ENCODE measurements at regions of chr16 and their contacts with region 1.

Region 1: DNA sequence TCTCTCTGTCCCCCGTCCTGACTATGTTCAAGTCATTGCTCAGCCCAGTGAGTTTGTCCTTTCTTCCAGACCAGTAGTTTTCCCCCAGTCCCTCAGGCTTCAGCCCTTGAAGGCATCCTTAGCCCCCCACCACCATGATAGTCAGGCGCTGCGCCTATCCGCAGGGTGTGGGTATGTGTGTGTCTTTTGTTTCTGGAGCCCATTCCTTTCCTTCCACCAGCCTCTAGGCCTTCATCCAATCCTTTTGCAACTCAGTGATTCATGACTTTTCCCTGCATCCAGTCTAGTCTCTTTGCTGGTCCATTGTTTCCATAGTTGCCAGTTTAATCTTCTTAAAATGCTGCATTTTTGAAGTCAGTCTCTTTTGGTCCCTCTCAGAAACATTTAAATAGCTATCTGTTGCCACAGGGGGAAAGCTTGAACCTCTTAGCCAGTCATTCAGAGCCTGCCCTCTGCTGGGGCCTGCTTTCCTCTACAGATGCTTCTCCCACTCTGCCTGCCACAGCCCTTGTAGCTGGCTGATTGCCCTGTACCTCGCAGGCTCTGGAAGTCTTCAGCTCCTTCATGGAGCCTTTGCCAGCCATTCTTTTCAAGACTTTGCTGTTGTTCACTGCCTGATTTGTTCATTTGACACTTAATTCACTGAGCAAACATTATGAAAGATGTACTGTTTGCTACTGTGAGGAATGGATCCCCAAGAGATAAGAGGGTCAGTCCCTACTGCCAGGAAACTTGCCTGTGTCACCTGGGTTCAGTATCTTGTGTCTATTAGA is 55.9 kb upstream of the ADCY7 start:
- DNase-seq: peak; percentile 68
- H3K4me3 ChIP-seq: no peak overlapping the region
- H3K27me3 ChIP-seq: no peaks in the 10 kb centered on the region
- CTCF ChIP-seq: peak; percentile 88

Region 2: GRCh38 chr16:50024684-50025536 is 185.5 kb before region 1 on chr16 and contains the start of gene CNEP1R1:
- CTCF ChIA-PET with region 1: interaction called, 68 read pairs
- POLR2A ChIA-PET with region 1: interaction called, 3 read pairs
- DNase-seq: peak; percentile 72
- H3K4me3 ChIP-seq: peak within 1 kb of the TSS; percentile 70
- H3K27me3 ChIP-seq: peaks cover 2% of the 10 kb centered on the region
- CTCF ChIP-seq: peak; percentile 100
- polyA plus RNA-seq, gene CNEP1R1: 15.2 and 24.5 TPM in 2 replicates

Region 3: DNA sequence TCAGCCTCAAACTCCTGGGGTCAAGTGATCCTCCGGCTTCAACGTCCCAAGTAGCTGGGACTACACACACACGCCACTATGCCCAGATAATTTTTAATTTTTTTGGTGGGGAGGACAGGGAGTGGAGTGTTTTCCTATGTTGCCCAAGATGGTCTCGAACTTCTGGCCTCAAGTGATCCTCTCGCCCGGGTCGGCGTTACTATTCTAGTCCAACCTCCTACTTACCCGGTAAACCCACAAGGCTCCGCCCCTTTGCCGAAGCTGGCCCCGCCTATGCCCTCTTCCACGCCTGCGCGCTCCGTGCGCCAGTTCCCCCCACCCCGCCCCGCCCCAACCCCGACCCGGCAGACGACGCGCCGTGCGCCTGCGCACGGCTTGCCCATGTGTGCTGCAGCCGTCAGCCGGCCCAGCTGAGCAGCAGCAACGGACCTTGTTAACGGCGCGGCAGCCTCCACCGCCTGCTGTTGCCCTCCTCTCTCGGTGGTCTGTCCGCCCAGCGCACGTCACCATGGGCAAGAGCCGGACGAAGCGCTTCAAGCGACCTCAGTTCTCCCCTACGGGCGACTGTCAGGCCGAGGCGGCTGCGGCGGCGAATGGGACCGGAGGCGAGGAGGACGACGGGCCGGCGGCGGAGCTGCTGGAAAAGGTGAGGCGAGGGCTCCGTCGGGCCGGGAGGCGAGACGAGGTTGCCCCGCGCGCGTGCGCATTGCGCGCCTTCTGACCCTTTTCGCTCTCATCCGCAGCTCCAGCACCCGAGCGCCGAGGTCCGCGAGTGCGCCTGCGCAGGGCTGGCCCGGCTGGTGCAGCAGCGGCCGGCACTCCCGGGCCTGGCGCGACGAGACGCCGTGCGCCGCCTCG is 144.6 kb before region 1 on chr16 and contains the start of gene HEATR3:
- CTCF ChIA-PET with region 1: interaction called, 148 read pairs
- POLR2A ChIA-PET with region 1: no interaction called
- DNase-seq: peak; percentile 56
- H3K4me3 ChIP-seq: peak within 1 kb of the TSS; percentile 98
- H3K27me3 ChIP-seq: no peaks in the 10 kb centered on the region
- CTCF ChIP-seq: no peak
- polyA plus RNA-seq, gene HEATR3: 13.0 and 18.5 TPM in 2 replicates

Region 4: DNA sequence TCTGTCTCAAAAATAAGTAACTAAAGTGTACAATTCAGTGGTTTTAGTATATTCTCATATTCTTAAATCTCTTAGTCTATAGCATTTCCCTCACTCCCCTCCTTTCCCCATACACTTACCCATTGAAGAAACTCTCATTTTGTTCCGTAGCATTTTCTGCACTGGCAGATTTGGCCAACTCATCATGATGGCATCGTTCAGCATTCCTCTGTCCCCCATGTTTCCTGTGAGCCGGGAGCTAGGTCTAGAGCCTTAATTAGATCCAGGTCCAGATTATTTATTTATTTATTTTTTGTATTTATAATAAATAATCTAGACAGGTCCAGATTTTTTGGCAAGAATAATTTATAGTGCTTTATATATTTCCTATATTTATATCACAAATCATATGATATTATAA is 113.7 kb before region 1 on chr16:
- CTCF ChIA-PET with region 1: interaction called, 12 read pairs
- POLR2A ChIA-PET with region 1: no interaction called
- DNase-seq: peak; percentile 50
- H3K4me3 ChIP-seq: no peak overlapping the region
- H3K27me3 ChIP-seq: no peaks in the 10 kb centered on the region
- CTCF ChIP-seq: no peak

Region 5: DNA sequence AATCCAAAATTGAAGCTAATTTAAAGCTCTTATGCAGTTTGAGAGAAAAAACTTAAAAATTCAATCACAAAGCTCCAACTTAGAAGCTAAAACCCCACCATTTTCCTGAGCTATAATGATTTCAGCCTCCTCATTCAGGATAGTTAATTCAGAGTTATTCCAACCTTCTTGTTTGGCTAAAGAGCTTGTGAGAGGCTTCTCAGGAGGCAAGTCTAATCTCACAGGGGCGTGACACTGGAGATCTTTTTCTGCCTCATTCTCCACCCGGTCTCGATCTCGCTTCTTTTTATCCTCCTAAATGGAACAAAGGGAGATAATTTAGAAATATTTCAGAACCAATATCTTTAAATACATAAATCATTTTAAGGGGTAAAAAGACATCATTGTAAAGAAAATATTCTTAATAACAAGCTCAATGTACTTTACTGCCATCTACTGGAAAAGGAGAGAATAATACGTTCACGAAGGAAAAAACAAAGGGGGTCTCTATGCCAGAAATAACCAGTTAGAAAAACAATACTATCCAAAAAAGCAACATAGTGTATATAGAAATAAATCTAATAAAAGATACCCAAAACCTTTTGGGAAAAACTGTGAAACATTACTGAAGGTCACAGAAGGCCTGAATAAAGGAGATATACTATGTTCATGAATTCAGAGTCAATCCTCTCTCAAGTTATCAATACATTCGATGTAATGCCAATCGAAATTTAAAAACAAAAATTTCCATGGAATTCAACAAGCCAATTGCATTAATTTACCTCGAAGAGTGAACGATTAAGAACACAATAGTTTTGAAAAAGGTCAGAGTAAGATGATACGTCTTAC is 144.4 kb after region 1 on chr16:
- CTCF ChIA-PET with region 1: interaction called, 63 read pairs
- POLR2A ChIA-PET with region 1: no interaction called
- DNase-seq: no peak
- H3K4me3 ChIP-seq: no peak overlapping the region
- H3K27me3 ChIP-seq: no peaks in the 10 kb centered on the region
- CTCF ChIP-seq: peak; percentile 54

Region 6: DNA sequence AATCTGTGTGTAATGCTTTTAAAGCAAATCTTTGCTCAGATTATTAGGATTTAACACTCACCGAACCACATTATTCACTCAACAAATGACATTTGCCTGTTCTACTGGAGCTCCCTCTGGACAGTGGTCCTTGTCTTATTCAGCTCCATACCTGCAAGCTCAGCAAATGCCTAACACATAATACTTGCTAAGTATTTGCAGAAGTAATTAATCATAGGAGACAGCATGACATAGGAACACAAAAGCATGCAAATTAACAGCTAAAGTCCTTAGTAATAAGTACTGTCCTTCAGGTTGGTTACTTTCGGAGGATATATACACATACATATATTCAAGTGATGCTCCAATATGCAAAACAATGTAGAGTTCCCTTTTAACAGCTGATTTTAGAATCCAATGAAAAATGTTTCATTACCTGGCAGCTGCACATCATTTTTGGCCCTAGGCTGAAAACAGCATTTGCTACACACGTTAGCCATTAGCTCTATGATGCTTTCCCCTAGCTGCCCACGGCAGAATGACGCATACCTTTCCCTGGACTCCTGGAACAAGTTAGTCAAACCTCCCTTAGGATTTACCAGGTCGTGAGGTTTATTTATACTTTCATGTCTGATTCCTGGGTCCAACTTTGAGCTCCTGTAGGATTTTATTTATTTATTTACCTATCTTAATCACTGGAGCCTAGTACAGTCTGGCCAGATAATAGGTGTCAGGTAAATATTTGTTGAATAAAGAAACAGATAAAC is 149.8 kb after region 1 on chr16:
- CTCF ChIA-PET with region 1: interaction called, 63 read pairs
- POLR2A ChIA-PET with region 1: no interaction called
- DNase-seq: peak; percentile 35
- H3K4me3 ChIP-seq: no peak overlapping the region
- H3K27me3 ChIP-seq: no peaks in the 10 kb centered on the region
- CTCF ChIP-seq: no peak

Region 7: DNA sequence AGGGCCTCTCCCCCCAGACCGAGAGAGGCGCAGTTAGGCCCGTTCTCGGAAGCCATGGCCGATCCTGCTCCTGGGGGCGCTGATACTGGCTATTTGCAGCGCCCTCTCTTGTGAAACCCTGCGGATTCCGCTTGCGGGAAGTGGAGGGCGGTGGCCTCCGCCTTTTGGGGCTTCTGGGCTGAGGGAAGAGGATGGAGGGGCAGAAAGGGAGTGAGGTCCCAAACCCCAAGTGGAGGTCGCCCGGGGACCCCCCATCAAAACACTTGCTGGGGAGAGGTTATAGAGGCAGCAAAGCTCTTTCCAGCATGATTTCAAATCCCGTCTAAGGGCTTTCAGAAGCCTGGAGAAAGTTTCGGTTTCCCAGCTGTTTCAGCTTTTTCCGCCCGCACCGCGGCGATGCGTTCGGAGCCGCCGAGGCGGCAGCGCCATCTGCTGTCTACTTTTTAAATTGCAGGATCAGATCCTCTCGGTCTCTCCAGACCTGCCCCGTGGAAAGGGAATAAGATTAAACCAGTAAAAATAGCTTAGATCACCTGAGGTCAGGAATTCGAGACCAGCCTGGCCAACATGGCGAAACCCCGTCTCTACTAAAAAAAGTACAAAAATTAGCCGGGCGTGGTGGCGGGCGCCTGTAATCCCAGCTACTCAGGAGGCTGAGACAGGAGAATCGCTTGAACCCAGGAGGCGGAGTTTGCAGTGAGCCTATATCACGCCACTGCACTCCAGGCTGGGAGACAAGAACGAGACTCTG is 454.9 kb after region 1 on chr16:
- CTCF ChIA-PET with region 1: interaction called, 10 read pairs
- POLR2A ChIA-PET with region 1: no interaction called
- DNase-seq: peak; percentile 4
- H3K4me3 ChIP-seq: peak overlapping the region; percentile 30
- H3K27me3 ChIP-seq: no peaks in the 10 kb centered on the region
- CTCF ChIP-seq: peak; percentile 84

Measured in BJ (cell line).